Naive thymus-derived CD4-positive, alpha-beta T cell (primary cell): ENCODE measurements at regions of chr10 and their contacts with region 1.

Region 1: GRCh38 chr10:102835007-102835482 is 2.2 kb downstream of the CYP17A1 start:
- DNase-seq: peak; percentile 44 to 77 (median 66)
- ATAC-seq: peak; percentile 95
- H3K4me3 ChIP-seq: no peak overlapping the region
- H3K4me3 Mint-ChIP-seq: no peak overlapping the region
- H3K27ac ChIP-seq: no peak overlapping the region
- H3K27ac Mint-ChIP-seq: no peak overlapping the region
- H3K4me1 ChIP-seq: no peaks in the 10 kb centered on the region
- H3K4me1 Mint-ChIP-seq: peaks cover 0 to 1% (median 0%) of the 10 kb centered on the region in 7 donors
- H3K27me3 ChIP-seq: no peaks in the 10 kb centered on the region
- H3K27me3 Mint-ChIP-seq: peaks cover 0 to 9% (median 6%) of the 10 kb centered on the region in 5 donors

Region 2: DNA sequence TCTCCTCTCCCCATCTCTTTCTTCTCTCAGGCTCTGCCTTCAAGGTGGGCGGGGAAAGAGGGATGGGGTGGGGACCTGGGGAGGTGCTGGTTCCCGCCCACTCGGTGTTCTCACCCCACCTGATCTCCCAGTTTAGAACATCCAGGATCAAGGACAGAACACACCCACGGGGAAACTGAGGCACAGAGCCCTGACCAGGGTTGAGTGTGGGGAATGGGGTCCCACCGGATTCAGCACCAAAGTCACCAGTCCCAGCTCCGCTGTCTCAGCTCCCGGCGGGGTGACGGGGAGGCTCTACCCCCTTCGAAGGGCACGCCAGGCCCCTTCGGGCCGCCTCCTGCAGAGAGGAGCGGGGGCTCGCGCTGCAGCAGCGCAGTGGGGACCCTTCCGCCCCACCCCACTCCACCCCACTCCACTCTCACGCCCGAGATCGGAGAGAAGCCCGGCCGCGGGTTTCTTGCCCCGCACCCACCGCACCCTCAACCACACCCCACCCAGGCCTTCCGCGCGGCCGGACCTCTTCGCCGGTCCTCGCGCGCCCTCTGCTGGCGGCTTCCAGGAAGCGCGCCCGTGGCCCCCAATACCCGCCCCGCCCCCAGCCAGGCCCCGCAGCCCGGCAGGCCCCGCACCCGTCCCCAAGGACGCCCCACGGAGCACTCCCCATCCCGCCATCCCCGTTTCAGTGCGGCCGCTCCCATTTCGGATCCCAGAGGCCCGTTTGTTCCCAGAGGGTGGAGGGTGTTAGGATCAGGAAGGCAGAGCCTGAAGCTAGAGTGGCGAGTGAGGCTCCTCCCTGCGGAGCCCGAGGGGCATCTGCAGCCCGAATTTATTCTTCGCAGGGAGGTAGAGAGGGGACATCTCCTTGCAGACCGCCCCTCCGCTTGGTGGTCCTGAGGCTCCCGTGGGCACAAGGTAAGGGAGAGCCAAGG is 1264.9 kb before region 1 on chr10:
- CTCF ChIA-PET with region 1: no interaction called
- POLR2A ChIA-PET with region 1: no interaction called
- intact Hi-C with region 1: no loop called
- DNase-seq: peak; percentile 62 to 88 (median 77)
- ATAC-seq: peak; percentile 95
- H3K4me3 ChIP-seq: peak overlapping the region; percentile 69
- H3K4me3 Mint-ChIP-seq: peak overlapping the region; percentile 50 to 80 (median 74)
- H3K27ac ChIP-seq: no peak overlapping the region
- H3K27ac Mint-ChIP-seq: peak overlapping the region in 1 of 9 donors; percentile 43
- H3K4me1 ChIP-seq: peaks cover 4 to 17% of the 10 kb centered on the region in 2 donors
- H3K4me1 Mint-ChIP-seq: peaks cover 0 to 21% (median 13%) of the 10 kb centered on the region in 7 donors
- H3K27me3 ChIP-seq: peaks cover 0 to 10% of the 10 kb centered on the region in 2 donors
- H3K27me3 Mint-ChIP-seq: peaks cover 31 to 47% (median 45%) of the 10 kb centered on the region in 5 donors

Region 3: DNA sequence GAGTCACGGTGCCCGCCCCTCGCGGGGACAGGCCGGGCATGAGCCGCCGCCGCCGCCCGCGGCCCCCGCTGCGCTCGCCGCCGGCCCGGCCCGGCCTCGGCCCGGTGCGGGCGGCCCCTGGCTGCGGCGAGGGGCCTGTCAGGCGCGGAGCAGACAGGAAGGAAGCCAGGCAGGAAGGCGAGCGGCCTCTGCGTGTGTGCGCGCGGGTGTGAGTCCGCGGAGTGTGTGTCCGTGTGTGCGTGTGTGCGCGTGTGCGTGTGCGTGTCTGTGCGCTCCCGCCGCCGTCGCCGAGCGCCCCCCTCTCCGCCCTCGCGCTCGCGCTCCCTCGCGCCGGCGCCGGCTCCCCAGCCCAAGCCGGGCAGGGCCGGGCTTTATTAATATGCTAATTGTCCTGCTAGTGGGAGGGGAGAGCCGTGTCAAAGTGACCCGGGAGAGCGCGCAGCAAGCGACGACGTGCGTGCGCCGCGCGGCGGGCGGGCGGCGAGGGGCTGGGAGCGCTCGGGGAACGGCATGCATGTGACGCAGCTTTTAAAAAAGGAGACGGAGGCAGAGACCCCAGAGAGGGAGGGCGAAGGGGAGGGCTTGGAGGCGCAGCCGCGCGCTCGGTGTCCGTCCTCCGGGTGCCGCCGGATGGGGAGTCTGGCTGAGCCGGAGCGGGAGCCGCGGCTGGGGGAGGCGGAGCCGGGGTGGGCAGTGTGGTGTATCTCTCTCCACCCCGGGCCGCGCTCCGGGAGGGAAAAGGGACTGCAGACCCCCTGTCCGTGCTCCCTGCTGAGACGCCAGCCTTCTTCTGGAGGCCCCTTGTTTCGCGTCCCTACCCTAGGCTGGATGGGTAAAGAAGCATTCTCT is 714.7 kb before region 1 on chr10 and contains the start of gene LDB1:
- CTCF ChIA-PET with region 1: no interaction called
- POLR2A ChIA-PET with region 1: no interaction called
- intact Hi-C with region 1: no loop called
- DNase-seq: peak; percentile 51 to 74 (median 67)
- ATAC-seq: peak; percentile 70
- H3K4me3 ChIP-seq: peak within 1 kb of the TSS; percentile 90
- H3K4me3 Mint-ChIP-seq: peak within 1 kb of the TSS; percentile 88 to 98 (median 94)
- H3K27ac ChIP-seq: peak within 1 kb of the TSS; percentile 97
- H3K27ac Mint-ChIP-seq: peak within 1 kb of the TSS; percentile 80 to 98 (median 94)
- H3K4me1 ChIP-seq: peaks cover 40 to 43% of the 10 kb centered on the region in 2 donors
- H3K4me1 Mint-ChIP-seq: peaks cover 36 to 65% (median 57%) of the 10 kb centered on the region in 7 donors
- H3K27me3 ChIP-seq: no peaks in the 10 kb centered on the region
- H3K27me3 Mint-ChIP-seq: no peaks in the 10 kb centered on the region
- total RNA-seq, gene LDB1: 101 to 152 (median 115) TPM

Region 4: DNA sequence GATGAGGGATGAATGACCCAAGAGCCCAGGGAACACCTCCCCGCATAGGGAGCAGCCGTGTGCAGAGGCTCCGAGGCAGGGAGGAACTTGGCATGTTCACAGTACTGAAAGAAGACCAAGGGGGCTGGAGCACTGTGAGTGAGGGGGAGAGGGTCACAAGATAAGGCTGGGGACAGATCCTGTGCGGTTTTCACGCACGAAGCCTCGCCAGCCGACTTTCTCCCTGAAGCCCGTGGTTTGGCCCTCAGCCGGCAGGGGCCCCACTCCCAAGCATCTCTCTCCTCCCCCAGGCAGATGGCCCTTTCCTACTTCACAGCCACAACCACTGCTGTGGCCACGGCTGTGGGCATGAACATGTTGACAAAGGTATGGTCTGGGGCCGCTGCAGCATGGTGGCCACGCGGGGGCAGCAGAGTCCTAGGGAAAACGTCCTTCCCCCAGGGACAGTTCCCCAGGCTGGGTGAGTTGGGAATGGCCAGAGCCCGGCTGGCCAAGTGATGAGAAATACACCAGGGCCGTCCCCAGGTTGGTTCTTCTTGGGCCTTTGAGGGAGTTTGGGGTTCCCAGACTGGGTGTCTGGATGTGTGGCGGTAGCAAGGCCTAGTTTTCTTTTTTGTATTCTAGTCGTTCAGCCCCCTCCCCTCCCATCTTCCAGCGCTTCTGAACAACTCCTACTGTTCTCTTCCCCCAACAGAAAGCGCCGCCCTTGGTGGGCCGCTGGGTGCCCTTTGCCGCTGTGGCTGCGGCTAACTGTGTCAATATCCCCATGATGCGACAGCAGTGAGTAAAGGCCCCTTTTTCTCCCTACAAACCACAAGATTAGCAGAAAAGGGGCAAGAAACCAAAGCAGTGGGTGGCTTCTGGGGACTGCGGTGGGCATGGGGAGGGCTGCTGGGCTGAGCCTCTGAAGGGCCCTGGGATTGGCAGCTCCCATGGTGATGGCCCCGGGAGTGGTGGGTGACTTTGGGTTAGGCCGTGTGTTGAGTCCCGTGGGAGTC is 105.7 kb before region 1 on chr10:
- CTCF ChIA-PET with region 1: no interaction called
- POLR2A ChIA-PET with region 1: no interaction called
- intact Hi-C with region 1: loop called in 1 of 2 experiments (anchors 1 kb)
- DNase-seq: peak in 7 of 9 donors; percentile 19 to 63 (median 36)
- ATAC-seq: peak; percentile 92
- H3K4me3 ChIP-seq: no peak overlapping the region
- H3K4me3 Mint-ChIP-seq: no peak overlapping the region
- H3K27ac ChIP-seq: peak overlapping the region; percentile 23
- H3K27ac Mint-ChIP-seq: peak overlapping the region in 6 of 9 donors; percentile 1 to 65 (median 56)
- H3K4me1 ChIP-seq: no peaks in the 10 kb centered on the region
- H3K4me1 Mint-ChIP-seq: peaks cover 0 to 16% (median 7%) of the 10 kb centered on the region in 7 donors
- H3K27me3 ChIP-seq: no peaks in the 10 kb centered on the region
- H3K27me3 Mint-ChIP-seq: no peaks in the 10 kb centered on the region

Region 5: DNA sequence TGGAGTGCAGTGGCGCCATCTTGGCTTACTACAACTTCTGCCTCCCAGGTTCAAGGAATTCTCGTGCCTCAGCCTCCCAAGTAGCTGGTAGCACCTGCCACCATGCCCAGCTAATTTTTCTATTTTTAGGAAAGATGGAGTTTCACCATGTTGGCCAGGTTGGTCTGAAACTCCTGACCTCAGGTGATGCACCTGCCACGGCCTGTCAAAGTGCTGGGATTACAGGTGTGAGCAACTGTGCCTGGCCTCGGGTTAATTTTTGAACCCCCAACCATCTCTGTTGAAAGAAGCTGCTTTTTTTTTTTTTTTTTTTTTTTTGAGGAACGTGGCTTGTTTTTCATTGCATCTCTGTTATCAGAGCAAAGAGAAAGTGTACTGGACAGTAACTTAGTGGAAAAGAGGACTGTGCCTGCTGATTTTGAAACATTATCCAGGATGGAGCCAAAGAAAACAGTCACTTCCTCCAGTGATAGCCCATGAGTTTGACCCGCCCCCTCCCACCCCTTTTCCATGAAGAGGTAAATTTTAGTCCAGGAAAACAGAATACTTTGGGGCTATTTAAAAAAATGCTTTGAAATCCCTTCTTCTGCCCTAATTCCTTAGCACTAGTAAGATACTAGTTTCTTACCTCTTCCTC is 53.0 kb before region 1 on chr10:
- CTCF ChIA-PET with region 1: no interaction called
- POLR2A ChIA-PET with region 1: no interaction called
- intact Hi-C with region 1: no loop called
- DNase-seq: no peak
- ATAC-seq: no peak
- H3K4me3 ChIP-seq: no peak overlapping the region
- H3K4me3 Mint-ChIP-seq: no peak overlapping the region
- H3K27ac ChIP-seq: no peak overlapping the region
- H3K27ac Mint-ChIP-seq: peak overlapping the region in 1 of 9 donors; percentile 34
- H3K4me1 ChIP-seq: peaks cover 0 to 7% of the 10 kb centered on the region in 2 donors
- H3K4me1 Mint-ChIP-seq: peaks cover 29 to 74% (median 69%) of the 10 kb centered on the region in 7 donors
- H3K27me3 ChIP-seq: no peaks in the 10 kb centered on the region
- H3K27me3 Mint-ChIP-seq: no peaks in the 10 kb centered on the region

Region 6: DNA sequence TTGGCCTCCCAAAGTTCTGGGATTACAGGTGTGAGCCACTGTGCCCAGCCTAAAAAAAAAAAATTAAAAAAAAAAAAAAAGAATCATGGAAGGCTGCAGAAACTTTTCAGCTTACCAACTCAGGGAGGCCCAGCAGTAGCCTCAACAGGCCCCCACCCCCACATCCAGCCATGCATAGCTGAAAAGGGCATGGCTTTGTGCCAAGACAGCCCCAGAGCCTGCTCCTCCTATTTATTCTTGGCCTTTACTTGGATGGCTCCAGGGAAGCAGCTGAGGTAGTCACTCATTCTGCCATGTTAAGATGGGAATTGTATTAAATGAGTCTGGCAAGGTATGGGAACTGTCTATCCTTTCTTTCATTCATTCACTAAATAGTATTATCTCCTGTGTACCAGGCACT is 69.3 kb after region 1 on chr10:
- CTCF ChIA-PET with region 1: interaction called, 3 read pairs
- POLR2A ChIA-PET with region 1: no interaction called
- intact Hi-C with region 1: loop called (anchors 1 kb)
- DNase-seq: no peak
- ATAC-seq: no peak
- H3K4me3 ChIP-seq: no peak overlapping the region
- H3K4me3 Mint-ChIP-seq: no peak overlapping the region
- H3K27ac ChIP-seq: no peak overlapping the region
- H3K27ac Mint-ChIP-seq: no peak overlapping the region
- H3K4me1 ChIP-seq: no peaks in the 10 kb centered on the region
- H3K4me1 Mint-ChIP-seq: peaks cover 0 to 2% (median 0%) of the 10 kb centered on the region in 7 donors
- H3K27me3 ChIP-seq: no peaks in the 10 kb centered on the region
- H3K27me3 Mint-ChIP-seq: no peaks in the 10 kb centered on the region

Region 7: DNA sequence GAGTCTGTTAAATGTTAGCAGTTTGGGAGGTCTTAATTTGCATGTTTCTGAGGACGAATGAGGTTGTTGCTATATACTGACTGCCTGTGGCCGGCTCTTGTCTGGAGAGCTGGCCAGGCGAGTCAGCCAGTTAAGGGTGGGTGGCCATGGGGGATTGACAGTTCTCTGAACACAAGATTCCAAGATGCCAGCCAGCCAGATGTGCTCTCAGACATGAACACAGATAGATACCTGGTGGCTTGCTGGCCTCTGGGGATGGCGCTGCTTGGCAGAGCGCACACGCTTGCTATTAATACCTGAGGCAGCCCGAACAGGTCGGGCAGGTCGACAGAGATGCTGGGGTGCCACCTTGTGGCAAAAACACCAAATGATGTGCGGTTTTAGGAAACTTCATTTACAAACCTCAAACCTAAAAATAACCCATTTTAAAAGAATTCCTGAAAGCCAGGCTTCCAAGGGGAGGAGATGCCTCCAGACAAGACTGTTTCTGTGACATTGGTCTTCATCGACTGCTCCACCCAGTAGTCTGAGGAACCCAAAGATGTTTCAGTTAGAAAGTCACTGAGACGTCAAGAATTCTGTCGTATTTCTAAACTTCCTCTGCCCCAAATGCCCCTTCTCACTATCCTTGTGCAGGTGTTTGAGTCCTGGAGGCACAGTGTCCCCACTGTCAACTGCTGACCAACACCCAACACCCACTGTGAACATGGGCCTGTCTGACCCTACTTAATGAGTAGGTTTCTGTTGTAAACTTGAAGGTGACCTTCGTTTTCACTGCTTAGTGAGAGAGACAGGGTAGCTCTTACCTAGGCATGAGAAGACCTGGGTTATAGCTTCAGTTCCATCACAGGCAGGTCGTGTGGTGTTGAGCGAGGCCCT is 234.6 kb after region 1 on chr10:
- CTCF ChIA-PET with region 1: interaction called, 20 read pairs
- POLR2A ChIA-PET with region 1: interaction called, 4 read pairs
- intact Hi-C with region 1: loop called in 1 of 2 experiments (anchors 1 kb)
- DNase-seq: peak; percentile 48 to 75 (median 68)
- ATAC-seq: peak; percentile 89
- H3K4me3 ChIP-seq: no peak overlapping the region
- H3K4me3 Mint-ChIP-seq: peak overlapping the region in 3 of 10 donors; percentile 21 to 61 (median 33)
- H3K27ac ChIP-seq: no peak overlapping the region
- H3K27ac Mint-ChIP-seq: peak overlapping the region in 6 of 9 donors; percentile 16 to 75 (median 62)
- H3K4me1 ChIP-seq: no peaks in the 10 kb centered on the region
- H3K4me1 Mint-ChIP-seq: peaks cover 16 to 35% (median 23%) of the 10 kb centered on the region in 7 donors
- H3K27me3 ChIP-seq: no peaks in the 10 kb centered on the region
- H3K27me3 Mint-ChIP-seq: no peaks in the 10 kb centered on the region

Region 8: GRCh38 chr10:103244663-103245271 is 409.7 kb after region 1 on chr10:
- CTCF ChIA-PET with region 1: interaction called, 13 read pairs
- POLR2A ChIA-PET with region 1: no interaction called
- intact Hi-C with region 1: loop called in 1 of 2 experiments (anchors 1 kb)
- DNase-seq: peak; percentile 31 to 67 (median 52)
- ATAC-seq: peak; percentile 79
- H3K4me3 ChIP-seq: no peak overlapping the region
- H3K4me3 Mint-ChIP-seq: no peak overlapping the region
- H3K27ac ChIP-seq: no peak overlapping the region
- H3K27ac Mint-ChIP-seq: no peak overlapping the region
- H3K4me1 ChIP-seq: no peaks in the 10 kb centered on the region
- H3K4me1 Mint-ChIP-seq: peaks cover 3 to 28% (median 6%) of the 10 kb centered on the region in 7 donors
- H3K27me3 ChIP-seq: no peaks in the 10 kb centered on the region
- H3K27me3 Mint-ChIP-seq: peaks cover 0 to 13% (median 7%) of the 10 kb centered on the region in 5 donors

Region 9: DNA sequence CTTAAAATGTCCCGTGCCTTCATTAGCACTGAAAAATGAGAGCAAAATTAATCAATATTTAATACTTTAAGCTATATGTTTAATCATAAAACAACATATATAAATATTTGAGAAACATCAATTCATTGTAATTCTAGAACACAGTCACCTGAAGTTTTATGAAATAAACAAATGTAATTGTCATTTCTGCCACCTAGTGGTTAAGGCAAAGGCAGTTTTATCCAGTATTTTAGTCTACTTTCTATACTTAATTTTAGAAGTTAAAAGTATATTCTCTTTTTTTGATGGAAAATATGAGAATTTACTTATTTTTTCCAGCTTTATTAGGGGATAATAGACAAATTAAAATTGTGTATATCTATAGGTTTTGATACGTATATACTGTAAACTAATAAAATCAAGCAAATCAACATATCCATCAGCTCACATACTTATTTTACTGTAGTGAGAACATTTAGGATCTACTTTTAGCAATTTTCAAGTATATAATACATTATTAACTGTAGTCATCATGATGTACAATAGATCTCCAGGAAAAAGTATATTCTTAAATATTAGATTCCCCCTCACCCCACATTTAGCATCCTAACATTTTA is 499.0 kb after region 1 on chr10:
- CTCF ChIA-PET with region 1: interaction called, 3 read pairs
- POLR2A ChIA-PET with region 1: no interaction called
- intact Hi-C with region 1: loop called in 1 of 2 experiments (anchors 2 kb)
- DNase-seq: peak in 5 of 9 donors; percentile 4 to 35 (median 18)
- ATAC-seq: no peak
- H3K4me3 ChIP-seq: no peak overlapping the region
- H3K4me3 Mint-ChIP-seq: no peak overlapping the region
- H3K27ac ChIP-seq: no peak overlapping the region
- H3K27ac Mint-ChIP-seq: no peak overlapping the region
- H3K4me1 ChIP-seq: no peaks in the 10 kb centered on the region
- H3K4me1 Mint-ChIP-seq: no peaks in the 10 kb centered on the region
- H3K27me3 ChIP-seq: no peaks in the 10 kb centered on the region
- H3K27me3 Mint-ChIP-seq: no peaks in the 10 kb centered on the region

Region 10: DNA sequence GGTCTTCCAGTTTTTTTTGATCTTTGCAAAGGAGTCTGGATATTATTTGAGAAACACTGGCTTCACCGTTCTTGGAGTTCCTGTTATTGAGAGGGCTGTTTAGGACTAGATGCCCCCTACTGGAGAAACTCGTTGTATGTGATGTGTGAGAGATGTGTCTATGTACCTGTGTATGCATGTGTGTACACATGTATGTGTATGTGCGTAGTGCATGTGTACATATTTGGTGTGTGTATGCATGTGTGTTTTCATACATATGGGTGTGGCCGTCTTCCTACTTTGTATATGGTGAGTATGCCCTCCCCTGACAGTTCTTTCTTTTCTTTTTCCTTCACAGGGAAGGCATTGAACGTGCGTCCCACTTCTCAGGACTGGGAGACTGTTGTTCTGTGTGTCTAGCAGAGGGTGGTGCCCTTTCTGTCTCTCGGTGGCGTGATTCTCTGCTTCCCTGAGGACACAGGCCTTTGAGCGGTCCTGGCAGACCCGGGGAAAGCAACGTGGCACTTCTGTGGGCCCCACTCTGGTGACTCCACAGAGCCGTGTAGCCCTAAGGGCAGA is 647.0 kb after region 1 on chr10:
- CTCF ChIA-PET with region 1: no interaction called
- POLR2A ChIA-PET with region 1: interaction called, 3 read pairs
- intact Hi-C with region 1: loop called in 1 of 2 experiments (anchors 10 kb)
- DNase-seq: peak in 7 of 9 donors; percentile 41 to 69 (median 57)
- ATAC-seq: peak; percentile 79
- H3K4me3 ChIP-seq: no peak overlapping the region
- H3K4me3 Mint-ChIP-seq: no peak overlapping the region
- H3K27ac ChIP-seq: no peak overlapping the region
- H3K27ac Mint-ChIP-seq: no peak overlapping the region
- H3K4me1 ChIP-seq: no peaks in the 10 kb centered on the region
- H3K4me1 Mint-ChIP-seq: peaks cover 0 to 27% (median 4%) of the 10 kb centered on the region in 7 donors
- H3K27me3 ChIP-seq: no peaks in the 10 kb centered on the region
- H3K27me3 Mint-ChIP-seq: peaks cover 0 to 6% (median 0%) of the 10 kb centered on the region in 5 donors

Region 11: DNA sequence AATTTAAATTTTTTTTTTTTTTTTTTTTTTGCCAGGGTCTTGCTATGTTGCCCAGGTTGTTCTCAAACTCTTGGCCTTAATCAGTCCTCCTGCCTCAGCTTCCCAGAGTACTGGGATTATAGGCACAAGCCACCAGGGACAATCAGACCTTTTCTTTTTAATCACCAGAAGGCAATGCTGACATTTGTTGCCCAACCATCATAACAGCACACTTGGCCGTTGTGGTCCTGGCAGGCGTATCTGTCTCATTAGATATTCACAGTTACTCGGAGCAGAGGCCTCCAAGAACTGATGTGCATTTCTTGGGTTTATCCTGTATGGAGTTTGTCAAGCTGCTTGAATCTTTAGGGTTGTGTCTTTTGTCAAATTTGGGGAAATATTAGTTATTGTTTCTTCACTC is 1906.1 kb after region 1 on chr10:
- CTCF ChIA-PET with region 1: no interaction called
- POLR2A ChIA-PET with region 1: no interaction called
- intact Hi-C with region 1: no loop called
- DNase-seq: no peak
- ATAC-seq: no peak
- H3K4me3 ChIP-seq: no peak overlapping the region
- H3K4me3 Mint-ChIP-seq: no peak overlapping the region
- H3K27ac ChIP-seq: no peak overlapping the region
- H3K27ac Mint-ChIP-seq: no peak overlapping the region
- H3K4me1 ChIP-seq: no peaks in the 10 kb centered on the region
- H3K4me1 Mint-ChIP-seq: no peaks in the 10 kb centered on the region
- H3K27me3 ChIP-seq: no peaks in the 10 kb centered on the region
- H3K27me3 Mint-ChIP-seq: peaks cover 0 to 23% (median 7%) of the 10 kb centered on the region in 5 donors